CD8-positive, alpha-beta memory T cell (primary cell): ENCODE measurements at regions of chr2 and their contacts with region 1.

Region 1: DNA sequence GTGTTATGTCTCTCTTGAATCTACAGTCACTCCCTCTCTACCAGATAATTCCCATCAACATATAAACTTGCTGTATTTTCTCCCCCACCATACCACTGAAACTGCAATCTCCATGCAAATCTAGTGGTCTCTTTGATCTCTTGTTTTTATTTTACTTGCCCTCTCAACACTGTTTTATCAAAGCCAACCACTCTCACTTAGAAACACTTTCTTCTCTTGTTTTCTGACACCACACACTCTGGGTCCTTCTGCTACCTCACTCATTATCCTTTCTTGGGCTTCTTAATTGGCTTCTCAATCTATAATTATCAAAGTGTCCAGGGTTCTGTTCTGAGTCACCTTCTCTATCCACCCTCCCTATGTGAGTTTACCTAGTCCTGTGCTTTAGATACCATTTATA is 2.0 kb upstream of the MCFD2 start:
- DNase-seq: peak in 2 of 5 donors; percentile 33 to 50
- H3K4me3 ChIP-seq: no peak overlapping the region
- H3K4me3 Mint-ChIP-seq: peak overlapping the region; percentile 27 to 97 (median 91)
- H3K27ac ChIP-seq: no peak overlapping the region
- H3K27ac Mint-ChIP-seq: peak overlapping the region in 7 of 8 donors; percentile 14 to 98 (median 40)
- H3K4me1 ChIP-seq: peaks cover 45% of the 10 kb centered on the region
- H3K4me1 Mint-ChIP-seq: peaks cover 52 to 66% (median 66%) of the 10 kb centered on the region in 3 donors
- H3K27me3 ChIP-seq: no peaks in the 10 kb centered on the region
- H3K27me3 Mint-ChIP-seq: peaks cover 0 to 5% of the 10 kb centered on the region in 2 donors

Region 2: DNA sequence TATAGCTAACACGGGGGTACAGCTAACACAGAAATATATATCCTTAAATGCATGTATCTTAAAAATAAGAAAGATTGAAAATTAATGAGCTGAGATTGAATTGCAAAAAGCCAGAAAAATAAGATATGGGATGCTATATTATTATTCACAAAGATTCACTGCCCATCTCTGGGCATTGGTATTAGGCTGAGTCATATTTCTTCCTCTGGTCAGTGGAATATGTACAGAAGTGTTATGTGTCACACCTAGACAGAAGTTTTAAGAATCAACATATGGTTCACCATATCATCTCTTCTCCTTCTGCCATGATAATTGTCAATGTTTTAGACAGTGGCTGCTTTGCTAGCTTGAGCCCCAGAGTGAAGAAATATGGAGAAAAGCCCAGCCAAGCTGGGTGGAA is 12.0 kb after region 1 on chr2:
- CTCF ChIA-PET with region 1: interaction called, 20 read pairs
- POLR2A ChIA-PET with region 1: no interaction called
- DNase-seq: no peak
- H3K4me3 ChIP-seq: no peak overlapping the region
- H3K4me3 Mint-ChIP-seq: peak overlapping the region in 1 of 7 donors; percentile 44
- H3K27ac ChIP-seq: no peak overlapping the region
- H3K27ac Mint-ChIP-seq: no peak overlapping the region
- H3K4me1 ChIP-seq: no peaks in the 10 kb centered on the region
- H3K4me1 Mint-ChIP-seq: peaks cover 0 to 4% (median 4%) of the 10 kb centered on the region in 3 donors
- H3K27me3 ChIP-seq: no peaks in the 10 kb centered on the region
- H3K27me3 Mint-ChIP-seq: no peaks in the 10 kb centered on the region